ENCODE measurements at regions of chr5 and their contacts with region 1.

Region 1: GRCh38 chr5:172833686-172834414 is at the start of gene ERGIC1:
- DNase-seq: peak; percentile 91
- H3K4me3 Mint-ChIP-seq: peak within 1 kb of the TSS; percentile 87
- H3K27ac Mint-ChIP-seq: peak within 1 kb of the TSS; percentile 88
- H3K4me1 Mint-ChIP-seq: peaks cover 40% of the 10 kb centered on the region
- H3K27me3 Mint-ChIP-seq: no peaks in the 10 kb centered on the region
- CTCF ChIP-seq: peak; percentile 26
- total RNA-seq, gene ERGIC1: 257 and 292 TPM in 2 replicates

Region 2: GRCh38 chr5:172707285-172708182 is 126.3 kb before region 1 on chr5:
- CTCF ChIA-PET with region 1: no interaction called
- POLR2A ChIA-PET with region 1: no interaction called
- intact Hi-C with region 1: no loop called
- DNase-seq: peak; percentile 89
- H3K4me3 Mint-ChIP-seq: no peak overlapping the region
- H3K27ac Mint-ChIP-seq: no peak overlapping the region
- H3K4me1 Mint-ChIP-seq: peaks cover 7% of the 10 kb centered on the region
- H3K27me3 Mint-ChIP-seq: no peaks in the 10 kb centered on the region
- CTCF ChIP-seq: peak; percentile 88

Region 3: DNA sequence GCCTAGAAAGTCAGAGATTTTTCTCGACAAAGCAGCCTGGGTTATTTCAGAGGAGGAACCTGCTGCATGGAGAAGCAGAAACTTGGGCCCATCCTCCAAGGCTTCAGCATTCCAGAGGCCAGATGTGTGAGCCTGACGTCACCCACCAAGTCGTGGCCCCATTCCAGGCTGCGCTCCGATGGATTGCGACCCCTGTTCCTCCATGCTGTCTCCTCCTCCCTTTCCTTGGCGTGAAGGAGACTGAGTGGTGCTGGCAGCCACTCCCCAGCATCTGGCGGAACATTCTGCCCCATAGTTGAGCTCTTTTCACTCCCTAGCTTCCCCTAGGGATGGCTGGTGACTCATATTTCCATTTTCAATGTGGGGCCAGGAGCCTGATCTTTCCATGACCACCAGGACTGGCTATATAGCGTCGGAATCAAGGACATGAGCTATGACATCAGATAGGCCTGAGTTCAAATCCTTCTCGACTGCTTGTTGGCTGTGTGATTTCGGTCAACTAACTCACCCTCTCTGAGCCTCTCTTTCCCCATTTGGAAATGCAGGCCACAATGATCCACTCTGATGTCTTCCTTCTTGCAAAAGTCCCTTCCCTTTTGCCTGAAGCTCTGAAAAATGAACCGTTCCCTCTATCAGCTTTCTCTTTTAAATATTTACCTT is 38.4 kb before region 1 on chr5:
- CTCF ChIA-PET with region 1: interaction called, 3 read pairs
- POLR2A ChIA-PET with region 1: interaction called, 32 read pairs
- intact Hi-C with region 1: no loop called
- DNase-seq: peak; percentile 96
- H3K4me3 Mint-ChIP-seq: peak overlapping the region; percentile 21
- H3K27ac Mint-ChIP-seq: peak overlapping the region; percentile 79
- H3K4me1 Mint-ChIP-seq: peaks cover 50% of the 10 kb centered on the region
- H3K27me3 Mint-ChIP-seq: no peaks in the 10 kb centered on the region
- CTCF ChIP-seq: no peak

Region 4: GRCh38 chr5:172816901-172817564 is 16.8 kb before region 1 on chr5:
- CTCF ChIA-PET with region 1: interaction called, 5 read pairs
- POLR2A ChIA-PET with region 1: interaction called, 13 read pairs
- intact Hi-C with region 1: no loop called
- DNase-seq: peak; percentile 91
- H3K4me3 Mint-ChIP-seq: peak overlapping the region; percentile 38
- H3K27ac Mint-ChIP-seq: peak overlapping the region; percentile 20
- H3K4me1 Mint-ChIP-seq: peaks cover 31% of the 10 kb centered on the region
- H3K27me3 Mint-ChIP-seq: no peaks in the 10 kb centered on the region
- CTCF ChIP-seq: no peak

Region 5: GRCh38 chr5:172860520-172861443 is 26.9 kb after region 1 on chr5:
- CTCF ChIA-PET with region 1: interaction called, 3 read pairs
- POLR2A ChIA-PET with region 1: interaction called, 16 read pairs
- intact Hi-C with region 1: no loop called
- DNase-seq: peak; percentile 96
- H3K4me3 Mint-ChIP-seq: peak overlapping the region; percentile 50
- H3K27ac Mint-ChIP-seq: peak overlapping the region; percentile 75
- H3K4me1 Mint-ChIP-seq: peaks cover 64% of the 10 kb centered on the region
- H3K27me3 Mint-ChIP-seq: no peaks in the 10 kb centered on the region
- CTCF ChIP-seq: no peak

Measured in MCF 10A (cell line).